ENCODE measurements at regions of chr2 and their contacts with region 1.

Region 1: GRCh38 chr2:63861220-63861822 is 19.6 kb downstream of the UGP2 start:
- DNase-seq: peak; percentile 44 to 75 (median 67)
- H3K4me3 ChIP-seq: no peak overlapping the region
- H3K4me3 Mint-ChIP-seq: no peak overlapping the region
- H3K27ac ChIP-seq: no peak overlapping the region
- H3K27ac Mint-ChIP-seq: peak overlapping the region in 1 of 7 donors; percentile 66
- H3K4me1 ChIP-seq: no peaks in the 10 kb centered on the region
- H3K4me1 Mint-ChIP-seq: peaks cover 8% of the 10 kb centered on the region
- H3K27me3 ChIP-seq: no peaks in the 10 kb centered on the region
- H3K27me3 Mint-ChIP-seq: no peaks in the 10 kb centered on the region
- CTCF ChIP-seq: peak; percentile 70

Region 2: DNA sequence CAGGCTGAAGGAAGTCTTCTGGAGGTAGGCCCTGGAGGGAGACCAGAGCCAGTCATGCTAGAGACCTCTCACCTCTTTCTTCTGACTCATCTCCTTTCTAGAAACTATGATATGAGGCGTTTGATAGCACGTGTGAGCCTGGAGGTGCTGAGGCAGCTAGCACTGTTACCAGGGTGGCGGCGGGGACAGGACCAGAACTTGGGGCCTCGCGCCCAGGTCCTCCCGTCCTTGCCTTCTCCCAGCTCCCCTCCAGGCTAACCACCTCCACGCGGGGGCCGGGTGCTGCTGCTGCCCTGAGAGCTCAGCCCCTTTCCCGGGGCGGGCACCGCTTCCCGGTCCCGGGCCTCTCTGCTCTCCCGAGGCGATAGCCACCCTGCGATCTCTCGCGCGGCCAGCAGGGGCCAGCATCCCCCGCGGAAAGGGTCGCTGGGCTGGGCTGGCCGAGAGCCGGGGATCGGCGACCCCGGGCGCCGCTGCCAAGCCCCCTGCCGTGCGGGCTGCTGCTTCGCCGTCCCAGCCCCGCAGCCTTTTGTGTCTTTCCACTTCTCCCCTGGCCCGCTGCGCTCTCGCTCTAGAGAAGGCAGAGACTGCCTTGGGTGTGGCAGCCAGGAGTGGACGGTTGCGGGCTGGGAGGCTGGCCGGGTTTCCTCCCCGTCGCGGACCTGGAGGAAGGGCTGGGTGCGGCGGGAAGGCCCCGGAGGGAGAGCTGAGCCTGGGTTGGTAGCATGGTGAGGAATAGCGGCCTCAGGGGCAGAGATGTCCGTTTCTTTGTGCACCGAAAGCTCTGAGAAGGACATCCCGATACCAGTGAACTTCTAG is 1404.4 kb before region 1 on chr2:
- intact Hi-C with region 1: loop called in 1 of 2 experiments (anchors 5 kb)
- DNase-seq: peak; percentile 19 to 44 (median 32)
- H3K4me3 ChIP-seq: peak overlapping the region; percentile 23 to 74 (median 42)
- H3K4me3 Mint-ChIP-seq: peak overlapping the region; percentile 69 to 80
- H3K27ac ChIP-seq: no peak overlapping the region
- H3K27ac Mint-ChIP-seq: peak overlapping the region in 1 of 7 donors; percentile 66
- H3K4me1 ChIP-seq: peaks cover 8 to 13% of the 10 kb centered on the region in 2 donors
- H3K4me1 Mint-ChIP-seq: peaks cover 10% of the 10 kb centered on the region
- H3K27me3 ChIP-seq: no peaks in the 10 kb centered on the region
- H3K27me3 Mint-ChIP-seq: peaks cover 4 to 17% (median 5%) of the 10 kb centered on the region in 3 donors
- CTCF ChIP-seq: peak; percentile 97

Region 3: DNA sequence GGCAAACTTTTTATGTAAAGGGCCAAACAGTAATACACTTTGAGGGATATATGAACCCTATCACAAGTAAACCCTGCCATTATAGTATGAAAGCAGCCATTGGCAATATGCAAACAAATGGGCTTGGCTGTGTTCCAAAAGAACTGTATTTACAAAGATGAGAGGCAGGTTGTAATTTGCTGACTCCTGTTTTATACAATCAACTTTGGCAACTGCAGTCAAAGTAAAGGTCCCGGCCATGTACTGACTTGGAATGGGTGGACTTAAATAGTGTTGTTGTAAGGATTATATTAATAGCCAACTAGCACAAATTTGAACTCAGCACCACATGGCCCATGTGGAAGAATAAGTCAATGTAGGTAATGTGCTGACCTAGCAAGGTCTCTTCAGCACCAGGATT is 496.5 kb before region 1 on chr2:
- intact Hi-C with region 1: no loop called
- DNase-seq: no peak
- H3K4me3 ChIP-seq: no peak overlapping the region
- H3K4me3 Mint-ChIP-seq: no peak overlapping the region
- H3K27ac ChIP-seq: no peak overlapping the region
- H3K27ac Mint-ChIP-seq: no peak overlapping the region
- H3K4me1 ChIP-seq: no peaks in the 10 kb centered on the region
- H3K4me1 Mint-ChIP-seq: no peaks in the 10 kb centered on the region
- H3K27me3 ChIP-seq: no peaks in the 10 kb centered on the region
- H3K27me3 Mint-ChIP-seq: no peaks in the 10 kb centered on the region
- CTCF ChIP-seq: no peak

Region 4: GRCh38 chr2:63692002-63692606 is 169.2 kb before region 1 on chr2:
- intact Hi-C with region 1: loop called (anchors 2 to 5 kb)
- DNase-seq: peak; percentile 2 to 36 (median 27)
- H3K4me3 ChIP-seq: no peak overlapping the region
- H3K4me3 Mint-ChIP-seq: no peak overlapping the region
- H3K27ac ChIP-seq: no peak overlapping the region
- H3K27ac Mint-ChIP-seq: no peak overlapping the region
- H3K4me1 ChIP-seq: no peaks in the 10 kb centered on the region
- H3K4me1 Mint-ChIP-seq: peaks cover 2% of the 10 kb centered on the region
- H3K27me3 ChIP-seq: no peaks in the 10 kb centered on the region
- H3K27me3 Mint-ChIP-seq: peaks cover 2 to 3% (median 2%) of the 10 kb centered on the region in 3 donors
- CTCF ChIP-seq: peak; percentile 72

Region 5: DNA sequence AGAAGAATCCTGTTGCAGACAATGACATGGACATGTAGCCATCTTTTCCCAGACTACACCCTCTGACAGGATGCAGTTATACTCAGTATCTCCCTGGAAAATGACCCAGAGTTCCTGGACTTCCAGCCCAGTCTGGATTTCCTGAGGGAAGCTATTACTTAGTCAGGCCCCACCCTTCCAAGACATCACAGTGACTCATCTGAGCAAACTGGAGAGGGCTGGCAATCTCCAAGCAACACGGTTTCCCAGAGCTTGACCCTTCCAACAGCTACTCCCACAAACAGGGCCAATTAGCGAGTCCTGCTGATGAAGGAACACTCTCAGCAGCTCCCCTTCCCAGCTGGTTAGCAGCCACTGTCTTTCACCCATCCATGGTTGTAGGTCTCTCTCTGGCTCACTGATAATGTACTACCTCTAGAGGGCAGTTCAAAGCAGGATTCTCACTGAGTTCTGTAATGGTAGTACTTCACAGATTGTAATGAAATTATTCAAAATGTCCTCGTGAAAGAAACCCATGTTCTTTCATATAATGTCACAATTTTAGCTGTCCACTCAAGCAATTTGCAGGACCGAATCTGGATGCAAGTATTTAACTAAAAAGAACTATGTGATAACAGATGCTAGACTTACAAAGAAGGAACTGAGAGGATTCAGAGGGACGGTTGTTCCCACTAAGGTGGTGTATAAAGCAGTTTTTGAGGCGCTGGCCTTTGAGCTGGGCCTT is 162.3 kb before region 1 on chr2:
- intact Hi-C with region 1: loop called in 1 of 2 experiments (anchors 5 kb)
- DNase-seq: peak in 2 of 3 donors; percentile 5 to 11
- H3K4me3 ChIP-seq: no peak overlapping the region
- H3K4me3 Mint-ChIP-seq: no peak overlapping the region
- H3K27ac ChIP-seq: no peak overlapping the region
- H3K27ac Mint-ChIP-seq: no peak overlapping the region
- H3K4me1 ChIP-seq: no peaks in the 10 kb centered on the region
- H3K4me1 Mint-ChIP-seq: peaks cover 5% of the 10 kb centered on the region
- H3K27me3 ChIP-seq: no peaks in the 10 kb centered on the region
- H3K27me3 Mint-ChIP-seq: peaks cover 0 to 3% (median 1%) of the 10 kb centered on the region in 3 donors
- CTCF ChIP-seq: no peak